CD8-positive, alpha-beta T cell (primary cell): ENCODE measurements at regions of chr17 and their contacts with region 1.

Region 1: DNA sequence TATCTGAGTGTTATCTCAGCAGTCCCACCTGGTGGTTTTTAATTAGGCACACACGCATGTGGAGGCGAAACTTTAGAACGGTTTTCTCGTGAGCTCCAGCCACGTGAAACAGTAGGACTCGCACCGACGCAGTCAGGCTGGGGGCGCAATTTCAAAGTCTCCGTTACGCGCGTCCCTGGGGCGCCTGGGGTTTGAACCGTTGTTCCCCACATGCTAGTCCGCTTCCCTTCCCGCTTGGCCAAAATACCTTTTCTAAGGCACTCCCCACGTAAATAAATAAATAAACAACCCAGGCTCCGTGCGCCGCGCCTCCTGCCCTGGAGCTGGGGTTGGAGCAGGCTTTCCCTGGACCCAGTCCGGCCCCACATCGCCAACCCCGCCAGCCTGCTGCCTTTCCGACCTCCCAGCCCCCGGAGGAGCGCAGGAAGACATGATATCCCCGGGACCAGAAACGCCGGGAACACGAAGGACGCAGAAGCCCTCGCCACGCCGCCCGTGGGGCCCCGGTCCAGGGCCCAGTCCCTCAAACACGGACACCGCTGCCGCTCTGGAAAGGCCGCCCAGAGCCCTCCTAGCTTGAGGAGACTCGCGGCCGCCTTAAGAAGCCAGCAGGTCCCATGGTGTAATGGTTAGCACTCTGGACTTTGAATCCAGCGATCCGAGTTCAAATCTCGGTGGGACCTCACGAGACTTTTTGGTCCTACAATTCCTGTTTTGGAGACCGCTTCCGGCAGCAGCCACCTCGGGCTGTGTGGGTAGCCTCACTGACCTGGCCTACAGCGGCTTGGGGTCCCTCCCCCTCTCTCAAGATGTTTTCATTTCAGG is 18.2 kb downstream of the GNGT2 start:
- DNase-seq: peak; percentile 86 to 99 (median 92)
- ATAC-seq: peak; percentile 48
- H3K4me3 ChIP-seq: peak overlapping the region; percentile 68 to 80
- H3K4me3 Mint-ChIP-seq: peak overlapping the region; percentile 97
- H3K27ac ChIP-seq: peak overlapping the region; percentile 82 to 93
- H3K27ac Mint-ChIP-seq: peak overlapping the region; percentile 100
- H3K4me1 ChIP-seq: peaks cover 11% of the 10 kb centered on the region
- H3K4me1 Mint-ChIP-seq: peaks cover 29% of the 10 kb centered on the region
- H3K27me3 ChIP-seq: no peaks in the 10 kb centered on the region
- H3K27me3 Mint-ChIP-seq: no peaks in the 10 kb centered on the region
- CTCF ChIP-seq: peak; percentile 46

Region 2: DNA sequence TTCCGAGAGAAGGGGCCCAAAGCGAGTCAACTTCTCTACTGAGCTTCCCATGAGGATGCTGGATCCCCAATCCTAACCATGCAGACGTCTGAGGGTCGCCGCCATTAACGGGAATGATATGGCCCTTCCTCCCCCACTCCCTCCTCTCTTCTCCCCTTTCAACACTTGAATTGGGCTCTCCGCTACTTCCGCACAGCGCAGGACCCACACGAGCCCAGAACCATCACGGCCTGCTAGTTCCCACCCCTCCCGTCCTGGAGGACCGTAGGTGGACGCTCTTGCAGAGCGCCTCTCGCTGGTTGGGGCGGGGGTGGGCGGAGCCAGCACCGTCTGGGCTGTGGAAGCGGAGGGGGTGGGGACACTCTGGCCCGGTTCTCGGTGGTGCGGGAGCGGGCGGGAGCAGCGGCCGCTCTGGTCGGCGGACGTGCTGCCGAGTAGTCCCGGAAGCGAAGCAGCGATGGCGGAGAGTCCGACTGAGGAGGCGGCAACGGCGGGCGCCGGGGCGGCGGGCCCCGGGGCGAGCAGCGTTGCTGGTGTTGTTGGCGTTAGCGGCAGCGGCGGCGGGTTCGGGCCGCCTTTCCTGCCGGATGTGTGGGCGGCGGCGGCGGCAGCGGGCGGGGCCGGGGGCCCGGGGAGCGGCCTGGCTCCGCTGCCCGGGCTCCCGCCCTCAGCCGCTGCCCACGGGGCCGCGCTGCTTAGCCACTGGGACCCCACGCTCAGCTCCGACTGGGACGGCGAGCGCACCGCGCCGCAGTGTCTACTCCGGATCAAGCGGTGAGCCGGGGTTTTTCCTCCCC is 283.9 kb before region 1 on chr17 and contains the start of gene UBE2Z:
- CTCF ChIA-PET with region 1: no interaction called
- POLR2A ChIA-PET with region 1: no interaction called
- intact Hi-C with region 1: loop called (anchors 1 to 10 kb)
- DNase-seq: peak; percentile 79 to 96 (median 88)
- ATAC-seq: peak; percentile 87
- H3K4me3 ChIP-seq: peak within 1 kb of the TSS; percentile 74 to 77
- H3K4me3 Mint-ChIP-seq: peak within 1 kb of the TSS; percentile 95
- H3K27ac ChIP-seq: peak within 1 kb of the TSS; percentile 88 to 95
- H3K27ac Mint-ChIP-seq: peak within 1 kb of the TSS; percentile 99
- H3K4me1 ChIP-seq: peaks cover 39% of the 10 kb centered on the region
- H3K4me1 Mint-ChIP-seq: peaks cover 49% of the 10 kb centered on the region
- H3K27me3 ChIP-seq: no peaks in the 10 kb centered on the region
- H3K27me3 Mint-ChIP-seq: no peaks in the 10 kb centered on the region
- CTCF ChIP-seq: no peak
- total RNA-seq, gene UBE2Z: 56.4 to 56.7 TPM

Region 3: DNA sequence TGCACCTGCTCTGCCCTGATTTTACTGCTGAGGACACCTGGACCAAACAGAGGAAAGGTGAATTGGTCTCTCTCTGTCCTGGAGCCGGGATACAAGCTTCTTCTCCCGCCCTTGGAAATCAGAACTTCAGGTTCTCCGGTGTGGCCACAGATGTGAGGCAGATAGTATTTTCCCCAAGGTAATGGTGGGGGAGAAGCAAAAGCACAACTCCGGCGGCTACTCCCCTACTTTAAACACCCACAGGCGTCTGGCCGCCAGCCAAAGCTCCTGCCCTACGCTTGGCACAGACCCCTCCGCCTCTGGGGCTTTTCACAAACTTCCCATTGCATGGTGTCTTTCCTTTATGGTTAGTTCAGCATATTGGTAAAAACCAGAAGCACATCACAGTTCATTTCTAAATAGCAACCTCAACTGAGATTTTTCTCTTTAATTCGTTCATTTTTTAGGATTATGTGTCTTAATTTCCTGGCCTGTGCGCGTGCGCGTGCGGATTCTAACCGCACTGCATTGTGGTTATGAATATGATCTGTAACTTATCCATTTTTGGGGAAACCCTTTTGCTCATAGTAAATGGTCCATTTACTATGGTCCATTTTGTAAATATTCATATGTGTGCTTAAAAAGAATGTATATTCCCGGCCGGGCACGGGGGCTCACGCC is 98.9 kb before region 1 on chr17:
- CTCF ChIA-PET with region 1: no interaction called
- POLR2A ChIA-PET with region 1: no interaction called
- intact Hi-C with region 1: no loop called
- DNase-seq: no peak
- ATAC-seq: no peak
- H3K4me3 ChIP-seq: no peak overlapping the region
- H3K4me3 Mint-ChIP-seq: no peak overlapping the region
- H3K27ac ChIP-seq: no peak overlapping the region
- H3K27ac Mint-ChIP-seq: no peak overlapping the region
- H3K4me1 ChIP-seq: no peaks in the 10 kb centered on the region
- H3K4me1 Mint-ChIP-seq: no peaks in the 10 kb centered on the region
- H3K27me3 ChIP-seq: no peaks in the 10 kb centered on the region
- H3K27me3 Mint-ChIP-seq: peaks cover 6% of the 10 kb centered on the region
- CTCF ChIP-seq: no peak

Region 4: GRCh38 chr17:49210158-49211029 is 18.3 kb after region 1 on chr17 and contains the starts of genes ABI3 and GNGT2:
- CTCF ChIA-PET with region 1: interaction called, 13 read pairs
- POLR2A ChIA-PET with region 1: interaction called, 99 read pairs
- intact Hi-C with region 1: loop called (anchors 1 kb)
- DNase-seq: peak in 7 of 9 experiments; percentile 43 to 86 (median 69)
- ATAC-seq: peak; percentile 80
- H3K4me3 ChIP-seq: peak within 1 kb of the TSS; percentile 86 to 87
- H3K4me3 Mint-ChIP-seq: peak within 1 kb of the TSS; percentile 95
- H3K27ac ChIP-seq: peak within 1 kb of the TSS; percentile 61 to 63
- H3K27ac Mint-ChIP-seq: peak within 1 kb of the TSS; percentile 91
- H3K4me1 ChIP-seq: peaks cover 78% of the 10 kb centered on the region
- H3K4me1 Mint-ChIP-seq: peaks cover 71% of the 10 kb centered on the region
- H3K27me3 ChIP-seq: no peaks in the 10 kb centered on the region
- H3K27me3 Mint-ChIP-seq: no peaks in the 10 kb centered on the region
- CTCF ChIP-seq: no peak
- total RNA-seq, gene ABI3: 12.8 to 13.6 TPM
- total RNA-seq, gene GNGT2: 3.7 to 4.1 TPM

Region 5: GRCh38 chr17:49223517-49224197 is 31.5 kb after region 1 on chr17:
- CTCF ChIA-PET with region 1: interaction called, 355 read pairs
- POLR2A ChIA-PET with region 1: interaction called, 99 read pairs
- intact Hi-C with region 1: loop called (anchors 1 kb)
- DNase-seq: peak; percentile 37 to 84 (median 71)
- ATAC-seq: peak; percentile 19
- H3K4me3 ChIP-seq: peak overlapping the region; percentile 37 to 42
- H3K4me3 Mint-ChIP-seq: peak overlapping the region; percentile 76
- H3K27ac ChIP-seq: no peak overlapping the region
- H3K27ac Mint-ChIP-seq: peak overlapping the region; percentile 66
- H3K4me1 ChIP-seq: peaks cover 53% of the 10 kb centered on the region
- H3K4me1 Mint-ChIP-seq: peaks cover 47% of the 10 kb centered on the region
- H3K27me3 ChIP-seq: no peaks in the 10 kb centered on the region
- H3K27me3 Mint-ChIP-seq: no peaks in the 10 kb centered on the region
- CTCF ChIP-seq: peak; percentile 78

Region 6: DNA sequence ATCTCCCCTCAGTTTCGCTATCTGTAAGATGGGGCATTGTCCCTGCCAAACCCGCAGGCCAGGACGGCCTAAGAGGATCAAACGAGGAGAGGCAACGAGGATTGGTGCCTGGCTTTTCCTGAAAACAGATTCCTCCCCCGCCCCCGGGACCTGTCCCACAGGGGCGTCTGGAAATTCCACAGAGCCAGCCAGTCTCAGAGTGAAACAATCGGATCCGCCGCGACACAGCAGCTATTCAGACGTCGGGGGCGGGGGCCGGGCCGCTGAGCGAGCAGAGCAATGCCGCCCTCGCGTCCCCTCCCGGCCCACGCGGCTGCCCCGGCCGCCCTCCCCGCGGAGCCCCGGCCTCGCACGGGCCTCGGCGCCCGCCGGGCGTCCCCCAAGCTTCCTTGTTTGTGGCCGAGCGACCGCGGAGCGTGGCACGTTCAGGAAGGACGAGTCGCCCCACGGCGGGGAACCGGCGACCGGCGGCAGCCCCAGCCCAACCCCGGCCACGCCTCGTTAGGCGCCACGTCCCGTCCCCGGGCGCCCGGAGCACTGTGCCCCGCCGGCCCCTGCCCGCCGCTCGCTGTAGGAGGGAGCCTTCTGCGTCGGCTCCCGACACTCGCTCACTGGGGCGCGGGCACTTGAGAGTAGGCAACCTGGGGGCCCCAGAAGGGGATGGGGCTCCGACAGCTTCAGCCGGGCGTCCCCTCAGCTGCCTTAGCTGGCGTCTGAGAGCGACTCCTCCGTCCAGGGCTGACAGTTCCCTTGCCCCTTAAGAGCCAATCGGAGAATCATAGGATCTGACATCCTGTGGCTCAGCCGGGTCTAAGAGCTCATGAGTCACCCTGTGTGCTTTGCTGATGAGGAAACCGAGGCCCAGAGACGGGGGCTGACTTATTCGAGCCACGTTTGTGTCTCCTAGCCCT is 68.1 kb after region 1 on chr17:
- CTCF ChIA-PET with region 1: no interaction called
- POLR2A ChIA-PET with region 1: no interaction called
- intact Hi-C with region 1: loop called in 1 of 2 experiments (anchors 1 kb)
- DNase-seq: peak in 8 of 9 experiments; percentile 13 to 69 (median 48)
- ATAC-seq: peak; percentile 74
- H3K4me3 ChIP-seq: peak overlapping the region; percentile 58 to 66
- H3K4me3 Mint-ChIP-seq: peak overlapping the region; percentile 85
- H3K27ac ChIP-seq: no peak overlapping the region
- H3K27ac Mint-ChIP-seq: no peak overlapping the region
- H3K4me1 ChIP-seq: peaks cover 9% of the 10 kb centered on the region
- H3K4me1 Mint-ChIP-seq: peaks cover 8% of the 10 kb centered on the region
- H3K27me3 ChIP-seq: no peaks in the 10 kb centered on the region
- H3K27me3 Mint-ChIP-seq: peaks cover 13% of the 10 kb centered on the region
- CTCF ChIP-seq: no peak

Region 7: DNA sequence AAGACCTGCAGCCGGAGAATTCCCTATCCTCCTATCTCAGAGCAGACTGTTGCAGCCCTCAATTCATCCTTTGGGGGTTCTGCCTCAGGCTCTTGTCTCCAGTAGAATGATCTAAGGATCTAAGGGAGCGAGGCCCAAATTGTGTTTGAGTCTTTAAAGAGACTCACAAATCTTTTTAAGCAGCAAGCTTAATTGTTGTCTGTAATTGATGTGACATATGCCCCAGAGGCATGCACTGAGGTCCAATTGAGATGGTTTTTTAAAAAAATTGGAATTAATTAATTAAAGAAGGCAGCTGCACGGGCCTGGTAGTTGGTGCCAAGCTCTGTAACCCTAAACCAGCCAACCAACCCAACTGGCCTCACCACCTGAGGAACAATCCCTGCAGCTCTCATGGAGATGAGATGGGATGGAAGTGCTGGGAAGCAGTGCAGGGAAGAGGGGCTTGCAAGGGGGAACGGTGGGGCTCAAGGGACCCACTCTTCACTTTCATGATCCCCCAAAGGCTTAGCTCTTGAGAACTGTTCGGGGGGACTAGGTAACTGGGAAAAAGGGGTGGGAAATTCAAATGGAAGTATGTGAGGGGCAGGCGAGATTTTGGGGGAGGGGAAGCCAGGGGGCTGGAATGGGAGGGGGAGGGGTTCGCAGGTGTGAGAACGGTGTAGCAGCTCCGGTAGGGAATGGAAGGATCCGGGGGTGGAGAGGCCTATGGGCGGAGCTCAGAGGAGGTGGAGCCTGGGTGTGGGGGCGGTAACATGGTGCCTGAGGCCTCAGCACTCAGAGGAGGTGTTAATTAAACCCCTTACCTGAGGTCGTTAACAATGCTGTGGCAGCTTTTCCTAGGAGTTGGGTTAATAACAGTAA is 179.1 kb after region 1 on chr17:
- CTCF ChIA-PET with region 1: no interaction called
- POLR2A ChIA-PET with region 1: no interaction called
- intact Hi-C with region 1: no loop called
- DNase-seq: no peak
- ATAC-seq: no peak
- H3K4me3 ChIP-seq: no peak overlapping the region
- H3K4me3 Mint-ChIP-seq: no peak overlapping the region
- H3K27ac ChIP-seq: no peak overlapping the region
- H3K27ac Mint-ChIP-seq: no peak overlapping the region
- H3K4me1 ChIP-seq: no peaks in the 10 kb centered on the region
- H3K4me1 Mint-ChIP-seq: peaks cover 12% of the 10 kb centered on the region
- H3K27me3 ChIP-seq: no peaks in the 10 kb centered on the region
- H3K27me3 Mint-ChIP-seq: no peaks in the 10 kb centered on the region
- CTCF ChIP-seq: no peak

Region 8: DNA sequence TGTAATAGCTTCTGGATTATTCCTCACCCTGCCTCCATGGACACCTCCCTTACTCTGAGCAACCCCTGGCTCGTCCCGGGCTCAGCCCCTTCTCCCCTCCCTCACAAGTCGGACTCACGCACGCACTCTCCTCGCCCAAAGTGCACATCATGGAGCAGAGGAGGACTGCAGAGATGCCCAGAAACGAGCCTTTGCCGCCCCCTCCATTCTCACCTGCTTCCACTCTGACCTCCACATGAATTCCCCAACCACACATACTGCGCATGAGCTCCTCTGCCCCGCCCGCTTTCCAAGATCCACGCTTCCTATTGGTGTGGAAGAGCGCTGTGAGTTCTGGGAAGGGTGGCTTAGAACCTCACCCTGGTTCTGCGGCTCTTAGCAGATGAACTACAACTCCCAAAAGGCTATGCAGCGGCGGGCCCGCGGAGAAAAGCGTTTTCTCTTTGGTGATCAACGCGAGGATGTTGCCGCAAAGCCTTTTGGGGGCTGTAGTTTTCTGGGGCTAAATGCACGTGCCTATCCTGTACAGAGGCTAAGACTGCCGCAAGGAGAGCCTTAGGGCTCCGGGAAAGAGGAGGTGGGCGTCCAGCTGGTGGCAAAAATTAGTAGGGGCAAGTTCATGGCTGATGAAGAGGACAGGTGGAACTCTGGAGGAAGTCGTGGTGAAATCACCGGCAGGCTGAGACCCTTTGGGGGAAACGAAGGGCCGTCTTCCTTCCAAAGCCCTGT is 222.7 kb after region 1 on chr17 and contains the start of gene PHB1:
- CTCF ChIA-PET with region 1: no interaction called
- POLR2A ChIA-PET with region 1: no interaction called
- intact Hi-C with region 1: loop called (anchors 5 kb)
- DNase-seq: peak; percentile 86 to 98 (median 94)
- ATAC-seq: peak; percentile 98
- H3K4me3 ChIP-seq: peak within 1 kb of the TSS; percentile 80 to 96
- H3K4me3 Mint-ChIP-seq: peak within 1 kb of the TSS; percentile 99
- H3K27ac ChIP-seq: peak within 1 kb of the TSS; percentile 43 to 61
- H3K27ac Mint-ChIP-seq: peak within 1 kb of the TSS; percentile 93
- H3K4me1 ChIP-seq: peaks cover 12% of the 10 kb centered on the region
- H3K4me1 Mint-ChIP-seq: peaks cover 31% of the 10 kb centered on the region
- H3K27me3 ChIP-seq: no peaks in the 10 kb centered on the region
- H3K27me3 Mint-ChIP-seq: no peaks in the 10 kb centered on the region
- CTCF ChIP-seq: no peak
- total RNA-seq, gene PHB1: 26.3 to 27.0 TPM